Endothelial cell of umbilical vein (primary cell): ENCODE measurements at regions of chr11 and their contacts with region 1.

Region 1: DNA sequence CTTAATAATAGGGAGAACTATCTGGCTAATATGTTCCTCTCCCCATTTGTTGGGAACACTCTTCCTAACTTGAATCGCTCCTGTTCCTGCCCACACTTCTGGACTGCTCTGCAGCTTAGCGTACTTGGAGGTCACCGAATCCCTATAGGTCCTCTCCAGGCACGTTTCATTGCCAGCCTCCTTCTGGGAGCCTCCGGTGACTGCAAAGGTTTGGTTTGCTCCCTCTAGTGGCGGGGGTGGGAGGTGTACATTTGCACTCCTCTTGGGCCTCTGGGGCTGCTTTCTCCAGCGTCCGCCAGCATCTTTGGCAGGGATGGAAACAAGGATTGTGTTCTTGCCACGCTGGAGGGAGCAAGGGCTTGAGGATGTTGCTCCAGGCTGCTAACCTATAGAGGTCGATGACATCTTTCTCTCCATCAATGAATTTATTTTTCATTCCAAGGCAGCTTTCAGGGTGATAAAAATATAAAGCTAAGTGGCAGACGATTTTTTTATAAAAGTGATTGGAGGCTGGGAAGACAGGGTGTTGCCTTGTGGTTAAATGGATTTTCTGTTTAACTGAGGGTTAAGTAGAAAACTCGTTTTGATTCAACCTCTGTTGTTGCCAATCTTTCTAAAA is 48.7 kb downstream of the TSPAN18 start:
- DNase-seq: peak; percentile 60
- H3K4me3 ChIP-seq: no peak overlapping the region
- H3K27ac ChIP-seq: peak overlapping the region; percentile 58
- H3K4me1 ChIP-seq: peaks cover 21% of the 10 kb centered on the region
- H3K27me3 ChIP-seq: no peaks in the 10 kb centered on the region
- CTCF ChIP-seq: peak; percentile 75 to 86
- POLR2A ChIP-seq: no peak

Region 2: GRCh38 chr11:44658506-44658850 is 117.0 kb before region 1 on chr11:
- CTCF ChIA-PET with region 1: interaction called, 13 read pairs
- POLR2A ChIA-PET with region 1: no interaction called
- dilution Hi-C with region 1: no loop called
- intact Hi-C with region 1: no loop called
- DNase-seq: peak; percentile 55
- H3K4me3 ChIP-seq: no peak overlapping the region
- H3K27ac ChIP-seq: no peak overlapping the region
- H3K4me1 ChIP-seq: no peaks in the 10 kb centered on the region
- H3K27me3 ChIP-seq: peaks cover 0 to 3% of the 10 kb centered on the region in 2 experiments
- CTCF ChIP-seq: peak; percentile 39 to 55
- POLR2A ChIP-seq: no peak

Region 3: DNA sequence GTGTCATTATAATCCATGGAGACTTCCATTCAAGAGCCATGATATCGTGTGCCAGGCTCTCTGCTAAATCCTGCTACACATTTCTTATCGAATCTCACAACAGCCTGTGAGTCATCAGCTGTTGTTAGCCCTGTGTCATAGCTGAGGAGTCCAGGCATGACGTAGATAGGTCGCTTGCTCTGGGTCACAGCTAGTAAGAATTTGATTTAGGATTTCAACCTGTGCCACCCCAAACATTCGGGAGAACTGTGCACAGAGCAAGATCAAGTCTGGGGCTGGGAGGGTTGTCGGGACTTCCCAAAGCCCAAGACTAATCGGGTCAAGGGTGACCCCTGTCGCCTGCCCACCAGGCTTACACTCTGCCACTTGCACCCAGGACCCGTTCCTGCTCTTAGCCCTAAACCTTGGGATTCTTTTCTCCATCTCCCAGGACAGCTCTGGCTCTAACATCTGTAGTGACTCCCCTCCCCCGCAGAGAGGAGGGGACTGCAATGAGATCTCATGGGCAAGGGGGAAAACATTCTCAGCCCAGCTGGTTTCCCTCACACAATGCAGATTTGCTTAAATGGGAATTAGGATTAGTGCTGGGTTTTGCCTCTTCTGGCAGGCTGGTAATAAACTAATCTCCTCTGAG is 14.4 kb before region 1 on chr11:
- CTCF ChIA-PET with region 1: interaction called, 18 read pairs
- POLR2A ChIA-PET with region 1: interaction called, 4 read pairs
- dilution Hi-C with region 1: no loop called
- intact Hi-C with region 1: loop called (anchors 1 kb)
- DNase-seq: peak; percentile 92
- H3K4me3 ChIP-seq: no peak overlapping the region
- H3K27ac ChIP-seq: peak overlapping the region; percentile 21
- H3K4me1 ChIP-seq: peaks cover 33% of the 10 kb centered on the region
- H3K27me3 ChIP-seq: no peaks in the 10 kb centered on the region
- CTCF ChIP-seq: peak in 1 of 2 donors; percentile 21
- POLR2A ChIP-seq: no peak

Region 4: GRCh38 chr11:44793350-44794090 is 18.0 kb after region 1 on chr11:
- CTCF ChIA-PET with region 1: interaction called, 29 read pairs
- POLR2A ChIA-PET with region 1: no interaction called
- dilution Hi-C with region 1: no loop called
- intact Hi-C with region 1: no loop called
- DNase-seq: no peak
- H3K4me3 ChIP-seq: no peak overlapping the region
- H3K27ac ChIP-seq: no peak overlapping the region
- H3K4me1 ChIP-seq: peaks cover 15% of the 10 kb centered on the region
- H3K27me3 ChIP-seq: no peaks in the 10 kb centered on the region
- CTCF ChIP-seq: no peak
- POLR2A ChIP-seq: no peak

Region 5: GRCh38 chr11:44893846-44894617 is 118.6 kb after region 1 on chr11:
- CTCF ChIA-PET with region 1: interaction called, 12 read pairs
- POLR2A ChIA-PET with region 1: no interaction called
- dilution Hi-C with region 1: no loop called
- intact Hi-C with region 1: loop called (anchors 1 kb)
- DNase-seq: peak; percentile 69
- H3K4me3 ChIP-seq: no peak overlapping the region
- H3K27ac ChIP-seq: no peak overlapping the region
- H3K4me1 ChIP-seq: no peaks in the 10 kb centered on the region
- H3K27me3 ChIP-seq: no peaks in the 10 kb centered on the region
- CTCF ChIP-seq: peak; percentile 83 to 95
- POLR2A ChIP-seq: no peak

Region 6: GRCh38 chr11:45436118-45436517 is 660.6 kb after region 1 on chr11:
- CTCF ChIA-PET with region 1: no interaction called
- POLR2A ChIA-PET with region 1: no interaction called
- dilution Hi-C with region 1: no loop called
- intact Hi-C with region 1: no loop called
- DNase-seq: no peak
- H3K4me3 ChIP-seq: no peak overlapping the region
- H3K27ac ChIP-seq: no peak overlapping the region
- H3K4me1 ChIP-seq: no peaks in the 10 kb centered on the region
- H3K27me3 ChIP-seq: peaks cover 2 to 7% of the 10 kb centered on the region in 2 experiments
- CTCF ChIP-seq: no peak
- POLR2A ChIP-seq: no peak